H1 (cell line): ENCODE measurements at regions of chr2 and their contacts with region 1.

Region 1: DNA sequence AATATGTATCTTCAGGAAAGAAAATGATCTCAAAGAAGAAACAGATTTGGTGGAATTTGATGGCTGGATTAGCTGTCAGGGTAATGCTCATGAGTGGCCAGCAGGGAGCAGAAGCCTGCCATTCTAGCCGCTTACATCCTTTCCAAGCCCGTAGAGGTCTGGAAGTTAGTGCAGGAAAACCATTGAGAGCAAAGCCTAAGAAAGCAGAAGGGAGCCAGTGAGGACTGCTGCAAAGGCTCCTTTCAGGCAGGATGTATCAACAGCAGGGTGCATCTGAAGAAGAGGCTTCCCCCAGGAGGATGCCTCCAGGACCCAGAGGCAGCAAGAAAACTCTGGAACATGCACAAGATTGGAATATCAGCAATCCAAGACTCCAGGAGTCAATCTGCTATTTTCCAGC is 22.9 kb upstream of the LBH start:
- DNase-seq: peak; percentile 57 to 77
- H3K4me3 ChIP-seq: no peak overlapping the region
- H3K27ac ChIP-seq: no peak overlapping the region
- H3K4me1 ChIP-seq: peaks cover 0 to 4% (median 2%) of the 10 kb centered on the region in 4 experiments; a peak in 3 of 7 replicates
- H3K27me3 ChIP-seq: no peaks in the 10 kb centered on the region
- CTCF ChIP-seq: peak; percentile 68 to 89 (median 86)
- EP300 ChIP-seq: no peak
- POLR2A ChIP-seq: no peak
- RAD21 ChIP-seq: peak; percentile 98 to 99

Region 2: DNA sequence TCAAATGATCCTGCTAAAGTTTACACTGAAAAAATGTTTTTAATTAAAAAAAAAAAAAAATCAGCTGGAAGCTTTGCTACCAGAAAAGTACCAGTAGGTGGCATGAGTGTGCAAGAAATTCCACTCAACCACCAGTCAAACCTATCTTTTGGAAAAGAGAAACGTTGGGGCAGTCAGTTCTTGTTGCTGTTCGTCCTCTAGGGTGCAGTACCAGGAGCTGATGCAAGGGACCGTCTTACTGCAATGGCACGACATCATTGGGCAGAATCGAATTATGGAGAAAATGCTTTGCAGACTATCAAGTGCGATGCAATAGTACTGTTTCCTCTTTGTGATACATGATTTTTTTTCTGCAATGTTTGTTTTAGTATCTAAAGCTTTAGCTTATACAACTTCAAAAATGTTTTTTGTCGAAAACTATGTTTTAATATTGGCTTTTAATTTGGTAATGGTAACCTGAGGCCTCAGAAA is 43.4 kb before region 1 on chr2:
- CTCF ChIA-PET with region 1: interaction called, 47 read pairs
- POLR2A ChIA-PET with region 1: no interaction called
- DNase-seq: peak in 1 of 2 experiments; percentile 46
- H3K4me3 ChIP-seq: no peak overlapping the region
- H3K27ac ChIP-seq: no peak overlapping the region
- H3K4me1 ChIP-seq: peaks cover 0 to 4% (median 0%) of the 10 kb centered on the region in 4 experiments; a peak in 1 of 7 replicates
- H3K27me3 ChIP-seq: no peaks in the 10 kb centered on the region; a peak in 1 of 7 replicates
- CTCF ChIP-seq: peak; percentile 60 to 98 (median 90)
- EP300 ChIP-seq: no peak
- POLR2A ChIP-seq: no peak
- RAD21 ChIP-seq: peak; percentile 89 to 91

Region 3: GRCh38 chr2:30225131-30225762 is 16.8 kb after region 1 on chr2:
- CTCF ChIA-PET with region 1: interaction called, 24 read pairs
- POLR2A ChIA-PET with region 1: interaction called, 15 read pairs
- DNase-seq: no peak
- H3K4me3 ChIP-seq: no peak overlapping the region
- H3K27ac ChIP-seq: no peak overlapping the region
- H3K4me1 ChIP-seq: no peaks in the 10 kb centered on the region; a peak in 1 of 7 replicates
- H3K27me3 ChIP-seq: peaks cover 3 to 11% (median 9%) of the 10 kb centered on the region in 4 experiments; a peak in 6 of 7 replicates
- CTCF ChIP-seq: no peak
- EP300 ChIP-seq: no peak
- POLR2A ChIP-seq: no peak
- RAD21 ChIP-seq: no peak

Region 4: DNA sequence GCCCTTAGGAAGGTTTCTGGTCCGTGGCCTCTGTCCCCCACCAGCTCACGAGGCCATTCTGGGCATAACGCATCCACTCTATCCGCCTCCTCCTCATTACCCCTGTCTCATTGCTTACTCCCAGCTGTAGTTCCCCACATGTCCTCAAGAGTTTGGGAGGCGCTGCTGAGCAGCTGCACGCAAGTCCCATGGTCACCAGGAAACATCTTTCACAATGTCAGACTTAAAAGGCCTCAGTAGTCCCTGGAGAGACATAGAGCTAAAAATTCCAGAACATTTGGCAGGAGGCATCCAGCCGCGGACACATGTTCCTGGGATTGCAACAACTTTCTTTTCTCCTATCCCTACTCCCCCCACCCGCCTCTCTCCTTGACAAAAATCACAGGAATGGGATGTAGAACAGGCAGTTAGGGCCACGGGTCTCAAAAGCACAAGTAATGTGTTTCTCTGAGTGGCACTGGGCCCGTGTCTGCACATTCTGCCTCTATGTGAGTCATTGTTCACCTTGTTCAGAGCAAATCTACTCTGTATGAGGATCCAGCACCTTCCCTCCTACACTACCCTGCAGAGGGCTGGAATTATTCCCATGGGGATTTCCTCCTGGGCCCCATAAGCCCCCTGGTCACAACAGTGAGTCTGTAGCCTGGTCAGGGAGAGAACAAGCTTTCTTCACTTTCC is 31.0 kb after region 1 on chr2:
- CTCF ChIA-PET with region 1: interaction called, 40 read pairs
- POLR2A ChIA-PET with region 1: interaction called, 3 read pairs
- DNase-seq: peak in 1 of 2 experiments; percentile 88
- H3K4me3 ChIP-seq: no peak overlapping the region
- H3K27ac ChIP-seq: no peak overlapping the region
- H3K4me1 ChIP-seq: no peaks in the 10 kb centered on the region
- H3K27me3 ChIP-seq: no peaks in the 10 kb centered on the region
- CTCF ChIP-seq: peak; percentile 81 to 99 (median 93)
- EP300 ChIP-seq: no peak
- POLR2A ChIP-seq: no peak
- RAD21 ChIP-seq: peak; percentile 71 to 82

Region 5: DNA sequence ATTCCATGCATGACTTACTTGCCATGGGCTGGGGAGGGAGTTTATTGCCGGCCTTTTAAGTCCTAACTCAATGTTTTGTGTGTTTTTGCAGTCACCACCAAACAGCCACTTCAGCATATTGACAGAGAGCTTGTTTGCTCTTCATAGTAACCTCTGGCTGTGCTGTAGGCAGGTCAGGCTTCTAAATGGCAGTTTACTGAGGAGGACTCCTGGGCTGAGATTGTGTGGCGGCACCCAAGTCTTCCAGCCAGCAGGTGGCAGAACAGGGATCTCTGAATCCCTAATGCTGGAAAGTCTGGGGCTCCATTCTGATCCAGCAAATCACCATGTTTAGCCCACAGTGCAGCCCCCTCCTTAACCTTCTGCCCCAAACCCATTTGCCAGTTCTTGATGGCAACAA is 477.5 kb after region 1 on chr2:
- CTCF ChIA-PET with region 1: interaction called, 12 read pairs
- POLR2A ChIA-PET with region 1: no interaction called
- DNase-seq: peak in 1 of 2 experiments; percentile 56
- H3K4me3 ChIP-seq: no peak overlapping the region
- H3K27ac ChIP-seq: no peak overlapping the region
- H3K4me1 ChIP-seq: no peaks in the 10 kb centered on the region
- H3K27me3 ChIP-seq: no peaks in the 10 kb centered on the region
- CTCF ChIP-seq: peak; percentile 47 to 65 (median 58)
- EP300 ChIP-seq: no peak
- POLR2A ChIP-seq: no peak
- RAD21 ChIP-seq: peak; percentile 34 to 48; a peak in 2 of 4 replicates